ENCODE measurements at regions of chr2 and their contacts with region 1.

Region 1: GRCh38 chr2:52976253-52976949 is 791.2 kb upstream of the CHAC2 start:
- DNase-seq: peak; percentile 63
- H3K4me3 Mint-ChIP-seq: no peak overlapping the region
- H3K27ac Mint-ChIP-seq: no peak overlapping the region
- H3K4me1 Mint-ChIP-seq: no peaks in the 10 kb centered on the region
- H3K27me3 Mint-ChIP-seq: no peaks in the 10 kb centered on the region
- CTCF ChIP-seq: peak; percentile 70

Region 2: DNA sequence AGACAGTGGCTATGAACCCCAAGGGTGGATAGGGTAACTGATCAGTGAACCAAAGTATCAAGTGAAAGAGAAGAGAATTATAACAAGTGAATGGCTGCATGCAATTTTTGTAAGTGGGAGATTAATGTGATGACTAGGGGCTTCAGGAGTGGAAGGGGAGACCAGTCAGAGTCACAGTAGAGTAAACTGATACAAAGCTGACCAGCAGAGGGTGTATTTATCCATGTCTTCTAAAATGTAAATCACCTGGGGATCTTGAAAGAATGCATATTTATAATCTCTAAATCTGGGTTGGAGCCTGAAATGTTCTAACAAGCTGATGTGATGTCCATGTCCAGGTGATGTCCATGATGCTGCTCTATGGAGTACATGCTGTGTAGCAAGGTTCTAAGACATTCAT is 560.1 kb before region 1 on chr2:
- CTCF ChIA-PET with region 1: interaction called, 4 read pairs
- POLR2A ChIA-PET with region 1: no interaction called
- intact Hi-C with region 1: loop called (anchors 1 kb)
- DNase-seq: peak; percentile 33
- H3K4me3 Mint-ChIP-seq: no peak overlapping the region
- H3K27ac Mint-ChIP-seq: no peak overlapping the region
- H3K4me1 Mint-ChIP-seq: no peaks in the 10 kb centered on the region
- H3K27me3 Mint-ChIP-seq: no peaks in the 10 kb centered on the region
- CTCF ChIP-seq: peak; percentile 15

Region 3: GRCh38 chr2:52956766-52957165 is 19.6 kb before region 1 on chr2:
- CTCF ChIA-PET with region 1: interaction called, 13 read pairs
- POLR2A ChIA-PET with region 1: interaction called, 3 read pairs
- intact Hi-C with region 1: no loop called
- DNase-seq: no peak
- H3K4me3 Mint-ChIP-seq: no peak overlapping the region
- H3K27ac Mint-ChIP-seq: no peak overlapping the region
- H3K4me1 Mint-ChIP-seq: peaks cover 12% of the 10 kb centered on the region
- H3K27me3 Mint-ChIP-seq: no peaks in the 10 kb centered on the region
- CTCF ChIP-seq: peak; percentile 34